Activated T-helper 1 cell treated with anti-CD3 and anti-CD28 coated beads, Interleukin-12 subunit alpha, Interleukin-12 subunit beta, Interleukin-2, Interleukin-4 antibody, amounts not matched to agents 30 ng/mL and 10 ng/mL and 1 ng/mL, durations not matched to agents 14 hours and 24 hours and 36 hours (primary cell): ENCODE measurements at regions of chr21 and their contacts with region 1.

Region 1: DNA sequence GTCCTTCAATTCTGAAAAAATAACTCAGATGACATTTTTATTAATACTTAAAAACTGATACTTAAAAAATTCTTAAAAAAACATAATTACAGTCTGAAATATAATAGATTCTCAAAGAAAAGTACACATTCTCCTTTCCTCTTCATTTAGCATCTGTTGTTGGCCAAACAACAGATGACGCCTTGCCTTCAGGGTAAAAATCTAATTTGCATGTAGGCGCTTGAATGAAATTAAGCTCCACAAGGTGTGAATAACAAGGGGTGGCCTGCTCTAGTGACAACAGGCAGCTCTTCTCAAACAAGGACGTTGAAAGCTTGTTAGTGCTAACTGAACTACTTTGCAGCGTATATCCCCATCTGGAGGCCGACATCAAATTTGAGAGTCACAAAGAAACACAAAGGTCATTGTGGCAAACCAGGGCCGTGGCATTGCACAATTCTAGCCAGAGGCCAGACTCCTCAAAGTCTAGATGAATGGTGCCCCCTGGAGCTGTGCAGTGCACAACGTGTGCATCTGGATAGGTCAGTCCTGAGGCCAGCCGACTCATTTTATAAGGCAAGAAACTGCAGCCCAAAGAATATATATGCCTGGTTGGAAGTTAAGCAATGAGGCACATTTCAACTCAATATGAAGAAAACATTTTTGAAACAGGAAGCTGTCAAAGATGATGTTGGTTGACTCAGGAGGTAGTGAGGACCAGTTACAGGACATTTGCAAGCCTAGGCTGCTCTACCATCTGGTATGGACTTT is 459.2 kb upstream of the RUNX1 start:
- DNase-seq: no peak
- H3K4me3 Mint-ChIP-seq: no peak overlapping the region
- H3K27ac Mint-ChIP-seq: no peak overlapping the region
- H3K4me1 Mint-ChIP-seq: peaks cover 68% of the 10 kb centered on the region
- H3K27me3 Mint-ChIP-seq: no peaks in the 10 kb centered on the region

Region 2: DNA sequence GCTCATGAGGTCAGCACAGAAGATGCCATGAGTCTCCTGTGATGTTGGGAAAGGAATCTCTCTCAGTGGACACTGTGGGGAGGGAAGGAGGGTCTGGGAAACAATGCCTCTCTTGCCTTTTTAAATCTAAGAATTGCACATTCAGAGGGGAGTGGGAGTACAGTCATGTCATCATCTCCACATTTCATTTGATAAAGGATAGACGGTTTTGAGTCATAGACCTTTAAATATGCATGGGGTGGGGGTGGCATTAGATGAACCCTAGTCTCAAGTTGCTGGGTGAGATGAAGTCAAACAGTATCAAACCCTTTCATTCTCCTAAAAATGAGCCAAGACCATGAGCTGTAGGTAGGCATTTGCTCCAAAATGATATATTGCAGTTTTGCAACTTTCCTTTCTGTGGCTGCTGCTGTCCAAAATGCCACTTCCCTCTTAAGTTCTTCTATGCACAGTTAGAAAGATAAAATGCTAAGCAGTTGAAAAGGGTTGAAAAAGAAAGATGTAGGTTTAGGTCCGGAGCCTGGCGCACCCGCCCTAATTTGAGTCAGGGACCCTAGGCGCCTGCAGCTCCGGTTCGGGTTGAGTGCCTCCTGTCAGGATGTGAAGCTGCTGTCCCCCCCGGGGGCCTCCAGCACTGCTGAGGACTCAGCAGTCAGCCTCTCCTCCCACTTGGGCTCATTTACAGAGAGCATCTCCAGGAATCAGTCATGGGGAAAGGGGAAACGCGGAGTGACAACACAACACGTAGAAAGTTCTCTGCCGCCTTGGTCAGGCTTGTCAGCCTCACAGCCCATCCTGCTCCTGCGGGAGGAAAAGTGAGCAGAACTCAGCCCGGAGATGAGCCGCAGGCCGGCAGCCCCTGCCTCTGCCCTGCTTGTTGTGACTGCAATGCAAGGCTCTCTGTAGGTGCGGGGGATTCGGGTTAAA is 20.1 kb after region 1 on chr21:
- intact Hi-C with region 1: loop called (anchors 1 kb)
- DNase-seq: peak; percentile 26
- H3K4me3 Mint-ChIP-seq: peak overlapping the region; percentile 84
- H3K27ac Mint-ChIP-seq: peak overlapping the region; percentile 93
- H3K4me1 Mint-ChIP-seq: peaks cover 64% of the 10 kb centered on the region
- H3K27me3 Mint-ChIP-seq: no peaks in the 10 kb centered on the region

Region 3: GRCh38 chr21:35575280-35575915 is 67.1 kb after region 1 on chr21:
- intact Hi-C with region 1: loop called (anchors 5 kb)
- DNase-seq: no peak
- H3K4me3 Mint-ChIP-seq: no peak overlapping the region
- H3K27ac Mint-ChIP-seq: no peak overlapping the region
- H3K4me1 Mint-ChIP-seq: peaks cover 17% of the 10 kb centered on the region
- H3K27me3 Mint-ChIP-seq: peaks cover 7% of the 10 kb centered on the region

Region 4: DNA sequence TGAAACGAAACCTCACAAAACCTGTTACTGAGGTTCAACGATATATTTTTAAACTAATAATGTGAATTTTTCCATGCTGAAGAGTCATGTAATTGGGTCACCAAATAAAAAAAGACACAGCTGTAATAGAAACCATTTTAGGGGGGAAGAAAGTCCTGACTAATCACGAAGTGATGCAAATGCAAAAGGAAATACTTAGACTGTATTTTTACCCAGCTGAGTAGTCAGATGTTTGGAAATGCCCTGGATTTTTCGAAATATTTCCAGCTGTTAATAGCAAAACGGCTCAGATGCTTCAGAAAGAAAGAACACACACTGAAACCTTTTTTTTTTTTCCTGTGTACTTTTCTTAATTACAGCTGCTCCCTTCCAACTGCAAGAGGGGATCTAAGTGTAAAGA is 341.7 kb after region 1 on chr21:
- intact Hi-C with region 1: no loop called
- DNase-seq: no peak
- H3K4me3 Mint-ChIP-seq: no peak overlapping the region
- H3K27ac Mint-ChIP-seq: no peak overlapping the region
- H3K4me1 Mint-ChIP-seq: no peaks in the 10 kb centered on the region
- H3K27me3 Mint-ChIP-seq: peaks cover 2% of the 10 kb centered on the region